Naive thymus-derived CD4-positive, alpha-beta T cell (primary cell): ENCODE measurements at regions of chr19 and their contacts with region 1.

Region 1: GRCh38 chr19:58581227-58582151 is 8.4 kb upstream of the MZF1 start:
- DNase-seq: peak; percentile 81 to 91 (median 89)
- ATAC-seq: peak; percentile 100
- H3K4me3 ChIP-seq: no peak overlapping the region
- H3K4me3 Mint-ChIP-seq: peak overlapping the region in 1 of 10 donors; percentile 38
- H3K27ac ChIP-seq: peak overlapping the region; percentile 48
- H3K27ac Mint-ChIP-seq: peak overlapping the region; percentile 7 to 90 (median 78)
- H3K4me1 ChIP-seq: peaks cover 0 to 7% of the 10 kb centered on the region in 2 donors
- H3K4me1 Mint-ChIP-seq: peaks cover 12 to 29% (median 24%) of the 10 kb centered on the region in 7 donors
- H3K27me3 ChIP-seq: no peaks in the 10 kb centered on the region
- H3K27me3 Mint-ChIP-seq: no peaks in the 10 kb centered on the region

Region 2: GRCh38 chr19:58395220-58396029 is 186.1 kb before region 1 on chr19 and contains the start of gene RNF225:
- CTCF ChIA-PET with region 1: no interaction called
- POLR2A ChIA-PET with region 1: no interaction called
- intact Hi-C with region 1: no loop called
- DNase-seq: no peak
- ATAC-seq: peak; percentile 20
- H3K4me3 ChIP-seq: no peak within 1 kb of the TSS
- H3K4me3 Mint-ChIP-seq: peak within 1 kb of the TSS in 1 of 10 donors; percentile 38
- H3K27ac ChIP-seq: no peak within 1 kb of the TSS
- H3K27ac Mint-ChIP-seq: peak within 1 kb of the TSS in 1 of 9 donors; percentile 32
- H3K4me1 ChIP-seq: peaks cover 0 to 1% of the 10 kb centered on the region in 2 donors
- H3K4me1 Mint-ChIP-seq: peaks cover 0 to 27% (median 13%) of the 10 kb centered on the region in 7 donors
- H3K27me3 ChIP-seq: peaks cover 3% of the 10 kb centered on the region in 2 donors
- H3K27me3 Mint-ChIP-seq: peaks cover 5 to 19% (median 7%) of the 10 kb centered on the region in 5 donors
- total RNA-seq, gene RNF225: 0.32 to 0.53 (median 0.50) TPM in 4 of 5 experiments, not detected in the other

Region 3: DNA sequence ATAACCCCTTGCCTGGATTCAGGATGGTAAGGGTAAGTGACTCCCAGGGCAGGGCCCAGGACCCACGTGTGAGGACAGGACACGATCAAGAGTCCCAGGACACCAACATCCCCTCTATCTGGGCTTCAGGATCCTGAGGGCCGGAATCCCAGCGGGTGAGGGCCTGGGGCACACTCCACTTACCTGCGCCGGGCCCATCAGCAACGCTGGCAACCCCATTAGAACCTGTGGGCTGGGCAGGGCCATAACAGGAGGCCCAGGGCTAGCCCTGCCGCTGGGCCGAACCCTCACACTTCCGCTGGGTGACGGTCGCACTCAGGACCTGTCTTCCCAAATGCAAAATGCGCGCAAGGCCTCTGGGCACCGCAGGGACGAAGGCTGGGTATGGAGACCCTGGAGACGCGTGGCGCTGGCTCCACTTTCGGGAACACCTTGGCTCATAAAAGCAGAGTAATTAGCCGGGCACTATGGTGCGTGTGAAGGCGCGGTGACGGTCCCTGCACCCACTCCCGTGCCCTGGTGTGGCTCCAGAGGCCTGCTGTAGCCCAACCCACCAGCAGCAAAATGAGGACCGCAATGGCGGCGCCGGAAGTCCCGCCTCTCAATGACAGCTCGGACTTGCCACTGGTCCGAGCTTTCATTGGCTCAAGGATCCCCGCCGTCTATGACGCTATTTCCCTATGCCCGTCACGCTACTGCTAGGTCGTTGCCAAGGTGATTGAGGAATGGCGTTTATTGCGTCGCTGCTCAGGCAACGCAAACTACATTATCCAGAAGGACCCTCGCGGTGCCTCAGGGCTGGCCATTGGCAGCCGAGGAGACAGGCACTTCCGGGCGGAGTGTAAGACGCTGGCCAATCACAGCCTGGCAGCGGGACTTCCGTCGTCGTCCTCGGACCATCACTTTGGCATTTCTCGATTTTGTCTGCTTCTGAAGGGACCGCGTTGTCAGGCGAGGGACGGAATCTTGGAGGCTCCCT is 141.6 kb before region 1 on chr19 and contains the start of gene ZNF132:
- CTCF ChIA-PET with region 1: no interaction called
- POLR2A ChIA-PET with region 1: no interaction called
- intact Hi-C with region 1: no loop called
- DNase-seq: peak; percentile 78 to 99 (median 95)
- ATAC-seq: peak; percentile 98
- H3K4me3 ChIP-seq: peak within 1 kb of the TSS; percentile 73
- H3K4me3 Mint-ChIP-seq: peak within 1 kb of the TSS; percentile 86 to 99 (median 96)
- H3K27ac ChIP-seq: peak within 1 kb of the TSS; percentile 81
- H3K27ac Mint-ChIP-seq: peak within 1 kb of the TSS; percentile 87 to 99 (median 97)
- H3K4me1 ChIP-seq: peaks cover 17% of the 10 kb centered on the region in 2 donors
- H3K4me1 Mint-ChIP-seq: peaks cover 21 to 35% (median 27%) of the 10 kb centered on the region in 7 donors
- H3K27me3 ChIP-seq: no peaks in the 10 kb centered on the region
- H3K27me3 Mint-ChIP-seq: no peaks in the 10 kb centered on the region
- total RNA-seq, gene ZNF132: 1.2 to 12.9 (median 4.9) TPM

Region 4: GRCh38 chr19:58558623-58559274 is 22.7 kb before region 1 on chr19:
- CTCF ChIA-PET with region 1: interaction called, 12 read pairs
- POLR2A ChIA-PET with region 1: interaction called, 11 read pairs
- intact Hi-C with region 1: no loop called
- DNase-seq: peak; percentile 99 to 100 (median 100)
- ATAC-seq: peak; percentile 79
- H3K4me3 ChIP-seq: peak overlapping the region; percentile 97
- H3K4me3 Mint-ChIP-seq: peak overlapping the region; percentile 87 to 98 (median 96)
- H3K27ac ChIP-seq: peak overlapping the region; percentile 97
- H3K27ac Mint-ChIP-seq: peak overlapping the region; percentile 93 to 99 (median 98)
- H3K4me1 ChIP-seq: peaks cover 51 to 63% of the 10 kb centered on the region in 2 donors
- H3K4me1 Mint-ChIP-seq: peaks cover 18 to 86% (median 77%) of the 10 kb centered on the region in 7 donors
- H3K27me3 ChIP-seq: no peaks in the 10 kb centered on the region
- H3K27me3 Mint-ChIP-seq: peaks cover 0 to 4% (median 0%) of the 10 kb centered on the region in 5 donors